ENCODE measurements at regions of chr13 and their contacts with region 1.

Region 1: GRCh38 chr13:77719128-77719527 is 21.6 kb downstream of the SLAIN1 start:
- DNase-seq: no peak

Region 2: DNA sequence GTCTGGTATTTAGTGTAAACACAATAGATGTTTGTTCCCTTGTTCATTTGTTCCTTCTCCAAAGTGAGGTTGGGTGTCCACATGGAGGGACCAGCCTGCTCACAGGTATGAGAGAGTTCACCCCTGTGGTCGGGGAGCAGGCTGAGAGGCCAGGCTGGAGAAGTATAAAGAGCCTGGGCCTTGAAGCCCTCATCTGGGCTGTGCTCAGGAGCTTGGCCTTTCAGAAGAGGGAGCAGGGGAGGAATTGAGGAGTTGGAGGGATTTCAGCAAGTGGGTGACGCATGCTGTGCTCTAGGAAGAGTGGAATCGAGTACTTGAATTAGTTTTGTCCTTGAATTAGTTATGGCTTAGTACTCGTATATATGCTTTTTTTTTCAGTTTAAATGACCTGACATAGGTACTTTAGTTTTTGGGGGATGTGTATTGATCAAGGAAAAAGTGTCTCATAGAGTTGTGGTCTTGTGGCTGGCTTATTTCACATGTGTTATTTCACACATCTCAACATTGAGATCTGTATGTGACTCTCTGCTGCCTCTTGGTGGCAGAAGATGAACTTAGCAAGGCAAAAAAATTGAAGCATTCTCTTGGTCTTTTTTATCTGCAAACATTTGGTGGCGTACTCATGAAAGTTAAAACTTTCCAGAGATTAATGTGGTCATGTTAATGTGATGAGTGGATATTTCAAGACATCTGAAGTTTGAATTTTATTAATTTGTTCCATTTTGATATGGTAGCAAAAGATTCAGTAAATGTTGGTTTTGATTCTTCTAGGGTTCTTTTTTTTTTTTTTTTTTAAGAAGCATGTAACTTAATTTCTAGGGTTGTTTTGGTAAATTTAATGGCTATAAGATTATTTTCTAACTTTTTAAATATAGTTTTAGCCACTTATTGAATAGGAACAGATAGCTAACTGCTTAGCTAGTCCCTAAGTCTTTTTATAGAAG is 32.7 kb after region 1 on chr13:
- intact Hi-C with region 1: loop called in 1 of 2 experiments (anchors 2 kb)
- DNase-seq: no peak

Region 3: DNA sequence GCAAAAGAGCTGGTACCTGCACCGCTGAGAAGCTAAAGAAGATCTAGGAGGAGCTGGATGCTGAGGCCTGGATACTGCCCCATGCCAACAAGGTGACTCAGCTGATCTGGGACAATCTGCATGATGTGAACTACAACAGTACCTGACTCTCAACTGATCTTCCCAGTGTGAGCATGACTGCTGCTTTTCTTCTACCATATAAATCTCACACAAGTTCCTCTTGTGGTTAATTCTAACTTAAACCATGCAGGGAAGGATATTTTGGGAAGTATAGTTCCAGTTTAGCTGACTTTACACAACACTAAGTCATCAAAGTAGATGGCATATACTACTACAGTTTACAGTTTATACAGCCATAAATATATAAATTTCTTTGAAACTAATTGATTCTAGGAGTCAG is 70.2 kb after region 1 on chr13:
- intact Hi-C with region 1: no loop called
- DNase-seq: no peak